ENCODE measurements at regions of chr2 and their contacts with region 1.

Region 1: GRCh38 chr2:10709290-10709939 is 12.0 kb upstream of the ATP6V1C2 start:
- DNase-seq: peak; percentile 50
- H3K4me3 Mint-ChIP-seq: no peak overlapping the region
- H3K27ac Mint-ChIP-seq: no peak overlapping the region
- H3K4me1 Mint-ChIP-seq: peaks cover 8% of the 10 kb centered on the region
- H3K27me3 Mint-ChIP-seq: peaks cover 82% of the 10 kb centered on the region
- CTCF ChIP-seq: peak; percentile 41

Region 2: DNA sequence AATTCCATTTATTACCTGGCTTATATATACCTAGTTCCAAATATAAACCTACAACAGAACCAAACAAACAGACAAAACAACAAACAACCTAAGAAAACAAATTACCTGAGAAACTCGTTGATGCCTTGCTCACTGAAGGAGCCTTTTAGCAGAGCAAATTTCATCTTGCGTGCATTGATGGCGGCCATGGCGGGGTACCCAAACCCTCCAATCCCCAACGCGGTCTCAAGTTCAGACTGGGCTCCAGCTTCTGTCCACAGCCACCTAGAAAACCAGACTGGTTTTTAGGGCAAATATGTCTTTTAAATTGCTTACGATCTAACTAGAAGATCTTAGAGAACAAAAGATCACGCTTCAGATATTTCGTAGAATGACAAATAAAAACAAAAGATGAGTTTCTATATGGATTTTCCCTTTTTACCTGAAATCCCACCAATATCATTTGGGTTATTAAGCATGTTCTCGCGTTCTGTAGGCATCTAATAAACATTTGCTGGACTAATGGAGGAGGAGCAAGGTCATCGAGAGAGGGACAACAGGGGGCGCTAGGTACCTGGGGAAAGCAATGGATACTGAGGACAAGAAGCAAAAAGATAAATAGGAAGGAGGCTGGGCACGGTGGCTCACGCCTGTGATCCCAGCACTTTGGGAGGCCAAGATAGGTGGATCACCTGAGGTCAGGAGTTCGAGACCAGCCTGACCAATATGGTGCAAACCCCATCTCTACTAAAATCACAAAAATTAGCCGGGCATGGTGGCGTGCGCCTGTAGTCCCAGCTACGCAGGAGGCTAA is 78.0 kb after region 1 on chr2:
- CTCF ChIA-PET with region 1: no interaction called
- intact Hi-C with region 1: loop called (anchors 10 kb)
- DNase-seq: no peak
- H3K4me3 Mint-ChIP-seq: no peak overlapping the region
- H3K27ac Mint-ChIP-seq: no peak overlapping the region
- H3K4me1 Mint-ChIP-seq: peaks cover 30% of the 10 kb centered on the region
- H3K27me3 Mint-ChIP-seq: no peaks in the 10 kb centered on the region
- CTCF ChIP-seq: no peak

Region 3: GRCh38 chr2:11203480-11203879 is 494.1 kb after region 1 on chr2:
- CTCF ChIA-PET with region 1: no interaction called
- intact Hi-C with region 1: no loop called
- DNase-seq: no peak
- H3K4me3 Mint-ChIP-seq: no peak overlapping the region
- H3K27ac Mint-ChIP-seq: no peak overlapping the region
- H3K4me1 Mint-ChIP-seq: no peaks in the 10 kb centered on the region
- H3K27me3 Mint-ChIP-seq: no peaks in the 10 kb centered on the region
- CTCF ChIP-seq: no peak

Measured in Calu3 (cell line).